IMR-90 (cell line): ENCODE measurements at regions of chr16 and their contacts with region 1.

Region 1: DNA sequence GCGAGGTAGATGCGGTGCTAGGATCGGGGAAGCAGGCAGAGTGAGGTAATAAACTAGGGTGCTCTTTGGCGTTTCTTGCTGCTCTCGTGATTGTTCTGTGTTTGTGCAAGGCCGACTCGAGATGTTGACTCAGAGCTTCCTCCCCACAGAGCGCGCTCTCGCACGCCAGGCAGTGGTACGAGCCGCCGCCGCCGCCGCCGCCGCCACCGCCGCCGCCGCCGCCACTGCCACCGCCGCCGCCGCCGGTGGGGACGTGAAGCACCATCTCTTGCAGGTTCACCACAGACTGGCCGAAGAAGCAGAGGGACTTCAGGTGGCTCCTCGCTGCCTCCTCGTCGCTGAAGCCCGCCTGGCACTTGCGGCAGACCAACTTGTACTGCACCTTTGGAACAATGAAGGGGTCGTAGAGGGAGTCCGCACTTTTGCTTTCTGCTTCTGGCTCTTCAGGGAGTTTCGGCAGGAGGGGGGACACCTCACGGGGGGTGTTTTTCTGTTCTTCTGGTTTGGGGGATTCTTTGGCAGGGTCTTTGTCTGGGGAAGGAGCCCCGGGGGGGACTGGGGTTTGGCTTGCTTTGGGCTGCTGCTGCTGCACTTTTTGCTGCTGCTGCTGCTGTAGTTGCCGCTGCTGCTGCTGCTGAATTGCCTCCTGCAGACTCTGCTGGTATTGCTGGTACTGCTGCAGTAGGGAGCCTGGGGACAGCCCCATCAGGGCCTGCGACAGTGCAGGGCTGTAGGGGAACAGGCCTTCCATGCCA is 260.2 kb downstream of the ZFHX3 start:
- DNase-seq: peak; percentile 94
- ATAC-seq: peak; percentile 87
- H3K4me3 ChIP-seq: peak overlapping the region; percentile 76
- H3K27ac ChIP-seq: peak overlapping the region; percentile 85
- H3K4me1 ChIP-seq: peaks cover 7% of the 10 kb centered on the region
- H3K27me3 ChIP-seq: no peaks in the 10 kb centered on the region
- CTCF ChIP-seq: no peak
- POLR2A ChIP-seq: no peak
- RAD21 ChIP-seq: no peak

Region 2: DNA sequence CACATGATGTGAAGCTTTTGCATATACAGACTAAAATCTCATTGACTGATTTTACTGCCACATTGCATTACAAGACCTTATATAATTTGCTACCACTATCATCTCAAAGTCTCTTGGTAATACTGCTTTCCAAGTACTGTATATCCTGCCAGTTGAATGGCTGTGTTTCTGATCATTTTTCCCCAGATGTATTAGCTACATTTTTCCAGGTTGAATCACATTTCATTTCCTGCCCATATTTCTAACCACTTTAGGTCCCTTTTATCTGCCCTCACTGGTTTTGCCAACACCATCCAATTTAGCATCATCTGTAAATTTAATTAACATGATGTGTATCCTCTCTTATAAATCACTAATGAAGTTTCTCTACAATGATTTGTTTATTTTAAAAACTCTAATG is 250.0 kb before region 1 on chr16:
- CTCF ChIA-PET with region 1: no interaction called
- POLR2A ChIA-PET with region 1: interaction called, 13 read pairs
- dilution Hi-C with region 1: no loop called
- in situ Hi-C with region 1: no loop called
- intact Hi-C with region 1: no loop called
- DNase-seq: peak; percentile 56
- ATAC-seq: peak; percentile 71
- H3K4me3 ChIP-seq: no peak overlapping the region
- H3K27ac ChIP-seq: no peak overlapping the region
- H3K4me1 ChIP-seq: peaks cover 2% of the 10 kb centered on the region; the same call in 1 of the 2 replicates
- H3K27me3 ChIP-seq: no peaks in the 10 kb centered on the region
- CTCF ChIP-seq: no peak
- POLR2A ChIP-seq: no peak
- RAD21 ChIP-seq: no peak

Region 3: DNA sequence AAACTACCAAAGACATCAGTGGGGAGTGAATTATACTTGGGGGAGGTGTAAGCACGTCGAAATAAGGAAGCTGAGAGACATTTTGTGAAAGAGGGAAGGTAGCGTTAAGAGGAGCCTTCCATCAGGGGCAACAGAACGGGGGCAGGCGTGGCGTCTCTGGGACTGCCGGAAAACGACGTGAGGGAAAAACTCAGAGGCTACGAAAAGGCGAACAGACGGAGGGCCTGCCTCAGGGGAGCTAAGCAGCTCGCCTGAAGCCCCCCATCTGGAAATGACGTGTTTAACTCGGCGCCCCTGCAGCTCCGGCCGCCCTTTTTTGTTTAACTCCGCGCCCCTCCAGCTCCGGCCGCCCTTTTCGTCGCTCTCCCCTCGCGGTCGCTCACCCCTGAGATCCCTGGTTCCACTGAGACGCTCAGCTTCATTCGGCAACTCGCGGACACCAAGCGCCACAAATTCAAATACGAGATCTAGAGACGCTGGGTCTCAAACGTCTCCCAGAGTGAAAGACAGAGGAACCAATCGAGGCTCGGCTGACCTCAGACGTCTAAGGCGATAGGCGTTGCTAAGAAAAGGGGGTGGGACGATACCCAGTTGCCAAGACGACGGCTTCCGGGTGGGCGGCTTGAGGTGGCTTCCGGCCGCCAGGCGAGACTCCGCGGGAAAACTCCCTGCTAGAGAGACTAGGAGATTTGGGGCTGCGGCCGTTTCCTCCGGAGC is 123.0 kb before region 1 on chr16:
- CTCF ChIA-PET with region 1: no interaction called
- POLR2A ChIA-PET with region 1: no interaction called
- dilution Hi-C with region 1: no loop called
- in situ Hi-C with region 1: no loop called
- intact Hi-C with region 1: loop called (anchors 5 kb)
- DNase-seq: peak; percentile 99
- ATAC-seq: peak; percentile 100
- H3K4me3 ChIP-seq: peak overlapping the region; percentile 65
- H3K27ac ChIP-seq: peak overlapping the region; percentile 26; the same call in 1 of the 2 replicates
- H3K4me1 ChIP-seq: no peaks in the 10 kb centered on the region
- H3K27me3 ChIP-seq: no peaks in the 10 kb centered on the region
- CTCF ChIP-seq: no peak
- POLR2A ChIP-seq: peak; percentile 67; the same call in 1 of the 2 replicates
- RAD21 ChIP-seq: no peak

Region 4: GRCh38 chr16:72740347-72740746 is 47.3 kb before region 1 on chr16:
- CTCF ChIA-PET with region 1: no interaction called
- POLR2A ChIA-PET with region 1: interaction called, 10 read pairs
- dilution Hi-C with region 1: no loop called
- in situ Hi-C with region 1: no loop called
- intact Hi-C with region 1: no loop called
- DNase-seq: peak; percentile 43
- ATAC-seq: peak; percentile 56; the same call in 1 of the 2 replicates
- H3K4me3 ChIP-seq: no peak overlapping the region
- H3K27ac ChIP-seq: no peak overlapping the region
- H3K4me1 ChIP-seq: no peaks in the 10 kb centered on the region
- H3K27me3 ChIP-seq: no peaks in the 10 kb centered on the region
- CTCF ChIP-seq: no peak
- POLR2A ChIP-seq: no peak
- RAD21 ChIP-seq: no peak

Region 5: GRCh38 chr16:73240928-73241327 is 453.2 kb after region 1 on chr16:
- CTCF ChIA-PET with region 1: no interaction called
- POLR2A ChIA-PET with region 1: no interaction called
- dilution Hi-C with region 1: no loop called
- in situ Hi-C with region 1: no loop called
- intact Hi-C with region 1: no loop called
- DNase-seq: no peak
- ATAC-seq: no peak
- H3K4me3 ChIP-seq: no peak overlapping the region
- H3K27ac ChIP-seq: no peak overlapping the region
- H3K4me1 ChIP-seq: no peaks in the 10 kb centered on the region
- H3K27me3 ChIP-seq: peaks cover 15% of the 10 kb centered on the region
- CTCF ChIP-seq: no peak
- POLR2A ChIP-seq: no peak
- RAD21 ChIP-seq: no peak

Region 6: GRCh38 chr16:74296432-74297144 is 1508.9 kb after region 1 on chr16 and contains the start of gene PSMD7:
- CTCF ChIA-PET with region 1: no interaction called
- POLR2A ChIA-PET with region 1: no interaction called
- dilution Hi-C with region 1: no loop called
- in situ Hi-C with region 1: no loop called
- intact Hi-C with region 1: loop called (anchors 10 kb)
- DNase-seq: peak; percentile 85
- ATAC-seq: peak; percentile 94
- H3K4me3 ChIP-seq: peak within 1 kb of the TSS; percentile 81
- H3K27ac ChIP-seq: peak within 1 kb of the TSS; percentile 94
- H3K4me1 ChIP-seq: peaks cover 4% of the 10 kb centered on the region; the same call in 1 of the 2 replicates
- H3K27me3 ChIP-seq: no peaks in the 10 kb centered on the region
- CTCF ChIP-seq: no peak
- POLR2A ChIP-seq: peak; percentile 91
- RAD21 ChIP-seq: no peak
- total RNA-seq, gene PSMD7: 80.8 and 124 TPM in 2 replicates